ENCODE measurements at regions of chr5 and their contacts with region 1.

Region 1: DNA sequence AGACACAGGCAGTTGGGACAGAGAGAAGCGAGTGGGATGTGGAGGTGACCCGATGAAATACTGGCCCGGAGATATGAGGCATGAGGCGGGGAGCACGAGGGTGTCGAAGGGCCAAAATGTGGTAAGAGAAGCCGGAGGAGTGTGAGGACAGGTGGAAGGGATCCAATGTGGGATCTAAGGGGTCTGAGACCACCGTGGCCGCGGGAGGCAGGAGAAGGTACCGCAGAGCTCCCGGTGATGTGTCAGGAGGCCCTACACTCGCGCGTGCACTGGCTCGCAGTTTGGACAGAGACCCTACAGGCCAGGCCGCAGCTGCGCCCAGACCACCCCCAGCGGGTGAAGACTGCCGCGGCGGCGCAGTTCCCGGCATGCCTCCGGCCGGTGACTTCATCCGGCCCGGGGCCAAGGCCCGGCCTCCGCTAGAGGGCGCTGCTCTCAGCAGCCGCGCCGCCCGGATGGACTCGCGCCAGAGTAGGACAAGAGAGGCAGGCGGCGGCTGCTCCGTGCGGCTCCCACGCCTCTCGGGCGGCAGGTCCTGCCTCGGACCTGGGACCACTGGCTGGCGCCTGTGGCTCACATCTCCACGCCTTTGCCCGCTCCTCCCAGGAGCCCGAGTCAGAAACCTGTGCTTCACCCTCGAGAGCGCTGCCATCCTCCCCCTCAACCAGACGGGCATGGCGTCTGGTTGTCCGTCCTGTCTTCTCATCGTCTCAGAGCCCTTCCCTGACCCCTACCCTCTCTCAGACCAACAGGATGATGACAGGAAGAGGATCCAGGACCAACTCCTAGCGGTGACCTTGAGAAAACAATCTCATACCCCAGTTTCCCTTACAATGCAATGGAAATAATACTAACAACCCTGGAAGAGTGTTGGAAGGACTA is 35.4 kb upstream of the STING1 start:
- DNase-seq: peak; percentile 90
- H3K4me3 ChIP-seq: peak overlapping the region; percentile 60
- H3K27ac ChIP-seq: no peak overlapping the region
- H3K4me1 ChIP-seq: peaks cover 30% of the 10 kb centered on the region
- CTCF ChIP-seq: peak; percentile 94

Region 2: DNA sequence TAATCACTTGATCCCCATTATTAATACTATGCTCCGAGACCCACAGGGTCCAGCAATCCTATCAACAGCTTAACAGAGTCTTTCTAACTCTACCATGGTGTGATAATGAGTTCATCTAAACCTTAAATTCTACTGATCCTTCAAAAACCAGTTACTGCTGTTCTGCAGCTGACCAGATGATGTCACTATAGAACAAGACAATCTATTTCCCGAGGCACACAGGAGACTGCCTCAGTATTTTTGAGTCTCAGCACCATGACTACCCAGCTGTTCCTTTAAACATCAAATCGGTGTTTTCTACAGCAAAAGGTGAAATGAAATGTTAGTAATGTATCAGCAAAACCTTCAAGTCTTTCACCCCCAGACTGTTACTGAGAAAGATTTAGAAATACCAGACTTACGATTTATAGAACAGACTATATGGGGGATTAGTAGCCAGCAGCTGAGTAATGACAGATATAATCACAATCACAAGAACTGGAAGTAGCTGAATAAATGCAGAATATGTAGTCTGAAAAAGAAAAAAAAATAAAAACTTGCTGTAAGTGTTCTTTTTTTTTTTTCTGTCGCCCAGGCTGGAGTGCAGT is 95.5 kb before region 1 on chr5:
- CTCF ChIA-PET with region 1: interaction called, 6 read pairs
- POLR2A ChIA-PET with region 1: interaction called, 3 read pairs
- intact Hi-C with region 1: loop called (anchors 1 kb)
- DNase-seq: peak; percentile 79
- H3K4me3 ChIP-seq: no peak overlapping the region
- H3K27ac ChIP-seq: no peak overlapping the region
- H3K4me1 ChIP-seq: no peaks in the 10 kb centered on the region
- CTCF ChIP-seq: peak; percentile 99

Region 3: DNA sequence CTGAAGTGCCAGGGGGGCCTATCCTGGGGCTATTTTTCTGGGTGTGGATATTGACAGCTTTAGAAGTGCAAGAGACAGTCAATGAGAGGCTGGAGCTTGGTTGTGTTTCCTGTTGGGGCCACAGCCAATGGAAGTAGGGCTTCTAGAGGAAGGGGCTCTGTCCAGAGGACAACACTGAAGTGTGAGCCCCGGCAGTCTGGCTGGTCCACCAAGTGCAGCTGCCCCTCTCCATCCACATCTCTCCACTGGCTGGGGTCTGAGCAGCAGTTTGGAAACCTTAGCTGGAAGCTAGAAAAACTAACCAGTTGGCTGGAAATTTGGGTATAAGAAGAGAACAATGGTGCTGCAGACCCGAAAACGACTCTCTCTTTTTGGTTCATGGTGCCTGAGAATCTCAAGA is 213.4 kb after region 1 on chr5:
- CTCF ChIA-PET with region 1: no interaction called
- POLR2A ChIA-PET with region 1: interaction called, 11 read pairs
- intact Hi-C with region 1: no loop called
- DNase-seq: no peak
- H3K4me3 ChIP-seq: no peak overlapping the region
- H3K27ac ChIP-seq: no peak overlapping the region
- H3K4me1 ChIP-seq: no peaks in the 10 kb centered on the region
- CTCF ChIP-seq: no peak

Region 4: GRCh38 chr5:139765409-139766217 is 247.7 kb after region 1 on chr5:
- CTCF ChIA-PET with region 1: no interaction called
- POLR2A ChIA-PET with region 1: no interaction called
- intact Hi-C with region 1: loop called (anchors 5 kb)
- DNase-seq: peak; percentile 84
- H3K4me3 ChIP-seq: peak overlapping the region; percentile 69
- H3K27ac ChIP-seq: no peak overlapping the region
- H3K4me1 ChIP-seq: peaks cover 20% of the 10 kb centered on the region
- CTCF ChIP-seq: peak; percentile 97

Measured in OCI-LY7 (cell line).